Gastrocnemius medialis (tissue), 4 donors: ENCODE measurements at regions of chr11 and their contacts with region 1.

Region 1: DNA sequence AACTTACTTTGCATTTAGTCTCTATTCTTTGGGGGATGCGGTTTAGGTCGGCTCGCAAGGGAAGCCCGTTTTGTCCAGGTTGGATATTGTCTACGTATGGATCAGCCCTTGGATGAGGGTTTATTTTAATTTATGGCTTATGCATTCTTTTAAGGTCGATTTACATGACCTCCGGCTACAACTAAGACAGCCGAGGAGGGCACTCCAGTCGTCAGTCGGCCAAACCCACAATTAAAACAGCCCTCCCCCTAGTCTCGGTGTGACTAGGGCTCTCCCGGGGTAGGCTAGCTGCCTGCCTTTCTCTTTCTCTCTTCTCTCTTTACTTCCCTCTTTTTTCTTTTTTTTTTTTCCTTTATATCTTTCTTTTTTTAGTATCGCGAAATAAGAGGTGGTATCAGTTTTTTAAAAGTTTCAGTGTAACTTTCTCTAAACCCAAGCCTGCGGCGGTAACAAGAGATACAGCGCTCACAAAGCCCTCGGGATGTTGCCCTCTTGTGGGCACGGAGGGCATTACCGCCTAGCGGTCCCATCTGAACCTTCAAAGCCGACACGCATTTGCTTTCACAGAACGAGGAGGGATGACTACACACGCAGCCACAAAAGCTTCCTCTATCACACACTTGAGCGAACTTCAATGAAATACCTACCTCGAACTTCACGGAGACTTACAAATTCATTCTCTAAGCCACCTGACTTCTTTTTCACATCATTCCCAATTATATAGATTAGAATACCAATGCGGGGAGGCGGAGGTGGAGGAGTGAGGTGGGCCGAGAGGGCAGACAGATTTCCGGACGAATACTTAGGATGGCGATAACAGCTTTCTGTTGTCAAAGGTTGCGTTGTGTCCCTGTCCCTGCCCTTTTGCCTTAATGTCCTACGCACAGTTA is 132.3 kb upstream of the C11orf58 start:
- DNase-seq: peak; percentile 90 to 92
- ATAC-seq: peak; percentile 52 to 54
- H3K4me3 ChIP-seq: peak overlapping the region; percentile 70 to 98 (median 94)
- H3K27ac ChIP-seq: peak overlapping the region; percentile 91 to 99 (median 96)
- H3K4me1 ChIP-seq: peaks cover 14 to 33% of the 10 kb centered on the region in 2 donors
- H3K27me3 ChIP-seq: peaks cover 0 to 3% (median 0%) of the 10 kb centered on the region in 3 donors
- CTCF ChIP-seq: peak; percentile 96 to 98 (median 97)
- POLR2A ChIP-seq: peak; percentile 81 to 89

Region 2: DNA sequence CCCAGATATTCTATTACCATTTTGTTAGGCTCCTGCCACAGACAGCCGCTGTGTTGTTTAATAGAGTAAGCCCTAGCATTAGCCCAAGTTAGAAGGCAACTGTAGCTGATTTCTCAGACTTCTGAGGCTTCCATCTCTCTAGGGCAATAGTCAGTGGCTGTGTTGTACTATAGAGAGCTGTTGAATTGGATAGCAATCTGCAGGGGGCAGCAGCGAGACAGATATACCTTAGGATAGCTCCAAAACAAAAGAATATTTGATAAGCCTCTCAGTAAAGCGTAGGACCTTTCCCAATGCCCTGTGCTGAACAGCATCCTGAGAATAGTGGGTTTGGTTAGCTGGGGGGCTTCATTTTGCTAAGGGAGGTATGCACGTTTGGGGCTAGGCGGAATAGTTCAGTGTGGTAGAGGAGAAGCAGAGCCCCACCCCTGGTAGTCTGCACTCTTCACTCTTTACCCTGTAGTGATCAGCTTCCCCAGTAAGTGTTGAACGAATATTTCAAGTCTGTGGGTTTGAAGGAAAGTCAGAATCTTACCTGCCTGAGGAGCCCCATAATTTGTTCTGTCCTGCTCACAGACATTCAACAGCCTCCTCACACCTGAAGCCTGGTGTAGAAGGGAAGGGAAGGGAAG is 976.3 kb before region 1 on chr11:
- in situ Hi-C with region 1: loop called in 2 of 4 experiments (anchors 25 kb)
- intact Hi-C with region 1: no loop called
- DNase-seq: peak in 1 of 2 donors; percentile 15
- ATAC-seq: no peak
- H3K4me3 ChIP-seq: no peak overlapping the region
- H3K27ac ChIP-seq: no peak overlapping the region
- H3K4me1 ChIP-seq: no peaks in the 10 kb centered on the region
- H3K27me3 ChIP-seq: no peaks in the 10 kb centered on the region
- CTCF ChIP-seq: no peak
- POLR2A ChIP-seq: no peak

Region 3: DNA sequence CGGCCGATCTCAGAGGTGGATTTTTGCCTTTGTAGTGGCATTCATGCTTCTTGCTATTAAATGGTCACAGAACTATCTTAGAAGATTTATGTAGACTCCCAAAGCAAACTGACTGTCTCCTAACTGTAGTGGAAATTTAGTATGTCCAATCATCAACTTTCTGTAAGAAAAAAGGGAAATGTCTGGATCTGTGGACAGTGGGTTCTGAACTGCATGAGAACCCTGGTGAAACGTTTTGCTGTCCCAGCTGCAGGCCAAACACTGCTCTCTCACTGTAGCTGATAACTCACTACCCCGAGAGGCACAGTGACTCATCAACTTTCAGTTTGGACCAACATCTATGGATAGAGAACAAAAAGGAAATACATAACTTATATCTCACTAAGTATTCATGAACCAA is 636.9 kb before region 1 on chr11:
- in situ Hi-C with region 1: loop called in 1 of 4 experiments (anchors 25 kb)
- intact Hi-C with region 1: loop called (anchors 2 kb)
- DNase-seq: peak; percentile 76 to 84
- ATAC-seq: peak; percentile 74 to 80
- H3K4me3 ChIP-seq: peak overlapping the region; percentile 30 to 47 (median 39)
- H3K27ac ChIP-seq: peak overlapping the region; percentile 84 to 95 (median 92)
- H3K4me1 ChIP-seq: peaks cover 39 to 44% of the 10 kb centered on the region in 2 donors
- H3K27me3 ChIP-seq: no peaks in the 10 kb centered on the region
- CTCF ChIP-seq: no peak
- POLR2A ChIP-seq: peak; percentile 68 to 78

Region 4: GRCh38 chr11:16117989-16118756 is 488.0 kb before region 1 on chr11:
- in situ Hi-C with region 1: loop called in 1 of 4 experiments (anchors 25 kb)
- intact Hi-C with region 1: loop called (anchors 5 kb)
- DNase-seq: peak; percentile 55 to 59
- ATAC-seq: peak; percentile 91 to 93
- H3K4me3 ChIP-seq: peak overlapping the region in 1 of 4 donors; percentile 10
- H3K27ac ChIP-seq: peak overlapping the region; percentile 56 to 79 (median 74)
- H3K4me1 ChIP-seq: peaks cover 38 to 55% of the 10 kb centered on the region in 2 donors
- H3K27me3 ChIP-seq: no peaks in the 10 kb centered on the region
- CTCF ChIP-seq: no peak
- POLR2A ChIP-seq: no peak

Region 5: DNA sequence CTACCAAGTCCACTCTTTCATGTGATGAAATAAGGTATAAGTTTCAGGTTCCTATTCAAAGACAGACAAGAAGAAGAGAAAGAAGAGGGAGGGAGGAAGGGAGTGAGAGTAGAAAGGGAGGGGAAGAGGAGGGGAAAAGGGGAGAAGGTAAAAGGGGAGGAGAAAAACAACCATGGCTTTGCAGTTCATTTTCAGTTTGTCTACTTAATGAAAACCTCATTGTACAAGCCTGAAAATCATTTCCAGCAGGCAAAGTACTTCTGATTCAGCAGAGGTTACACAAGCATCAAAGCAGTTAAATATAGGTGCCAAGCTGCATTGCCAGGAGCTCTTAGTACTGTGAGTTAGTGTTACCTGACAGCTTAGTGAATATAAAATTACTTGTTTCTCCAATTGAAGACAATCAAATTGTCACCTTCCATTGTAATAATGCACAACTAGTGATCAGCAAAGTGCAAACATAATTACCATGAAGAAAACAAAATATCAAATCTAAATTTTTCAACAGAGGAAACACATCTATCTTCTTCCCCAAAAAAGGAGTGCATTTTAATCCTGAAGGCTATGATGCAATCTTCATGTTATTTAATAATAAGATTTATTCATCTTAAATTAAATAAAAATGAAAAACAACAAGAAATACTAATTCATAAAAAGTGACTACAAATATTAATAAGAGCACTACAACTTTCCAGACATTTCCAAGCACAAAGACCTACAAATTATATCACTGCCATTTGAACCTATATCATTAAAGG is 258.0 kb before region 1 on chr11:
- in situ Hi-C with region 1: no loop called
- intact Hi-C with region 1: loop called (anchors 2 kb)
- DNase-seq: peak; percentile 63 to 77
- ATAC-seq: peak; percentile 86 to 95
- H3K4me3 ChIP-seq: peak overlapping the region in 2 of 4 donors; percentile 5 to 21
- H3K27ac ChIP-seq: peak overlapping the region; percentile 82 to 89 (median 85)
- H3K4me1 ChIP-seq: peaks cover 33 to 44% of the 10 kb centered on the region in 2 donors
- H3K27me3 ChIP-seq: no peaks in the 10 kb centered on the region
- CTCF ChIP-seq: no peak
- POLR2A ChIP-seq: no peak

Region 6: GRCh38 chr11:16572945-16573344 is 33.2 kb before region 1 on chr11:
- in situ Hi-C with region 1: no loop called
- intact Hi-C with region 1: loop called (anchors 2 kb)
- DNase-seq: peak; percentile 58 to 71
- ATAC-seq: peak; percentile 100
- H3K4me3 ChIP-seq: no peak overlapping the region
- H3K27ac ChIP-seq: peak overlapping the region; percentile 60 to 83 (median 74)
- H3K4me1 ChIP-seq: peaks cover 37 to 40% of the 10 kb centered on the region in 2 donors
- H3K27me3 ChIP-seq: no peaks in the 10 kb centered on the region
- CTCF ChIP-seq: no peak
- POLR2A ChIP-seq: no peak